ENCODE measurements at regions of chr12 and their contacts with region 1.

Region 1: GRCh38 chr12:50084775-50085614 is at the start of gene SMARCD1:
- DNase-seq: peak; percentile 86
- ATAC-seq: peak; percentile 90
- H3K4me3 Mint-ChIP-seq: peak within 1 kb of the TSS; percentile 90
- H3K27ac Mint-ChIP-seq: peak within 1 kb of the TSS; percentile 94
- H3K4me1 Mint-ChIP-seq: peaks cover 29% of the 10 kb centered on the region
- H3K27me3 Mint-ChIP-seq: no peaks in the 10 kb centered on the region
- total RNA-seq, gene SMARCD1: 72.3 to 78.1 TPM

Region 2: GRCh38 chr12:49903695-49904423 is 181.1 kb before region 1 on chr12 and contains the start of gene FAIM2:
- CTCF ChIA-PET with region 1: no interaction called
- POLR2A ChIA-PET with region 1: no interaction called
- DNase-seq: peak; percentile 67
- ATAC-seq: peak; percentile 85
- H3K4me3 Mint-ChIP-seq: peak within 1 kb of the TSS; percentile 67
- H3K27ac Mint-ChIP-seq: peak within 1 kb of the TSS; percentile 59
- H3K4me1 Mint-ChIP-seq: peaks cover 17% of the 10 kb centered on the region
- H3K27me3 Mint-ChIP-seq: peaks cover 14% of the 10 kb centered on the region
- total RNA-seq, gene FAIM2: 0.23 to 0.55 TPM

Region 3: DNA sequence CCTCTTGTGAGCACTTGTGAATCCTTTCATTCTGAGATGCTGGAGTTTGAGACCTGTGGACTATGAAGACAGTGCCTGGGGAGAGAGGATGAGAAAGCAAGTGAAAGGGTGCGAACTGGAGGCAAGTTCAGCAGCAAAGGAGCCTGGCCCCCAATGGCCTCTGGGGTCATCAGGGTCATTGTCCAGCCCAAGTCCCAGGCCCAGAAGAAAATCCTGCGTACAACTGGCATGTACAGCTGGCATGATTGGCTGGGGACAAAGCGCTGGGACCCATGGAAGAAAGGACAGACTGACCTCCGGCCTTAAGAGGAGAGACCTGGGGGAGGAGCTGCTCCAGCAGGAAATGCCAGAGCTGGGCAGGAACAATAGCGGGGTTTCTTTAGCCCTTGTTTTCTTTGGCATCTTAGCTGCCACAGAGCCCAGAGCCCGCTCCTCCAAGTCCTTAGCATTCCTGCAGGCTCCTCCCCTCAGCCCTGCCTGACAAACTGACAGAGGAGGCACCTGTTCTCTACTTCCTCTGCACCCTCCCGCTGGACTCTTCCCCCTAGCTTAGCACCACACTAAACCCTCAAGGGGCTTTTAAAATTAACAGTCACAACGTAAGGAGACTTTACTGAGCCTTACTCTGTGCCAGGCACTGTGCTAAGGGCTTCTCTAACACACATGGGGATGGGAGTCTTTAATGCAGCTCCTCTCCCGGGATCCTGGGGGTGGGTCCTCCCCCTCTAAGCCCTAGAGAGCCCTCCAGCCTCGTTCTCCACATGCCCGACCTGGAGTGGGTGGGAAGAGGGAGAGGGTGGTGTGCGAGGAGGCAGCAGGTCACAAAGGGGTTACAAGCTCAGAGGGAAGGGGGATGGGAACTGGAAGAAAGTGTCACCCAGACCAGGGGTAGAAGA is 125.2 kb before region 1 on chr12:
- CTCF ChIA-PET with region 1: no interaction called
- POLR2A ChIA-PET with region 1: no interaction called
- DNase-seq: no peak
- ATAC-seq: no peak
- H3K4me3 Mint-ChIP-seq: no peak overlapping the region
- H3K27ac Mint-ChIP-seq: no peak overlapping the region
- H3K4me1 Mint-ChIP-seq: peaks cover 10% of the 10 kb centered on the region
- H3K27me3 Mint-ChIP-seq: peaks cover 79% of the 10 kb centered on the region

Region 4: DNA sequence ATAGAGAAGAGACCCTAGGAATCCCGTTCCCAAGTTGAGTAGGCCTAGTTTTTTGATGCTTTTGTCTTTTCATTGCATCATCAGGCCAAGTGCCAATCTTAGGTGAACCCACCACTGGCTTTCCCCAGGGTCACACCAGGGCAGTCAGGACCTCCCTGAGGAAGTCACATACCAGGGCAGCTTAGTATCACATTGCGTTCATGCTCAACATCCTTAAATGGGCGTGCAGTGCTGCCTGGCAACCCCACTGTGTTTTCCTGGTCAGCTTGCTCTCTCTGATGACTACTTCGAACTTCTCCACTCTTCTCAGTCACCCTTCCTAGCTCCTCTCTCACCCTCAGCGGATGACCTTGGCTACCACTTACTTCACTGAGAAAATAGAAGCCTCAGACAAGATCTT is 18.6 kb before region 1 on chr12:
- CTCF ChIA-PET with region 1: interaction called, 26 read pairs
- POLR2A ChIA-PET with region 1: interaction called, 5 read pairs
- DNase-seq: no peak
- ATAC-seq: no peak
- H3K4me3 Mint-ChIP-seq: no peak overlapping the region
- H3K27ac Mint-ChIP-seq: no peak overlapping the region
- H3K4me1 Mint-ChIP-seq: peaks cover 27% of the 10 kb centered on the region
- H3K27me3 Mint-ChIP-seq: no peaks in the 10 kb centered on the region

Region 5: GRCh38 chr12:50167041-50167828 is 82.2 kb after region 1 on chr12 and contains the start of gene CERS5:
- CTCF ChIA-PET with region 1: interaction called, 7 read pairs
- POLR2A ChIA-PET with region 1: interaction called, 17 read pairs
- DNase-seq: peak; percentile 99
- ATAC-seq: peak; percentile 99
- H3K4me3 Mint-ChIP-seq: peak within 1 kb of the TSS; percentile 87
- H3K27ac Mint-ChIP-seq: peak within 1 kb of the TSS; percentile 98
- H3K4me1 Mint-ChIP-seq: peaks cover 27% of the 10 kb centered on the region
- H3K27me3 Mint-ChIP-seq: no peaks in the 10 kb centered on the region
- total RNA-seq, gene CERS5: 38.7 to 40.6 TPM

Region 6: GRCh38 chr12:50174971-50175715 is 90.1 kb after region 1 on chr12:
- CTCF ChIA-PET with region 1: interaction called, 29 read pairs
- POLR2A ChIA-PET with region 1: interaction called, 5 read pairs
- DNase-seq: peak; percentile 39
- ATAC-seq: no peak
- H3K4me3 Mint-ChIP-seq: no peak overlapping the region
- H3K27ac Mint-ChIP-seq: no peak overlapping the region
- H3K4me1 Mint-ChIP-seq: peaks cover 2% of the 10 kb centered on the region
- H3K27me3 Mint-ChIP-seq: no peaks in the 10 kb centered on the region

Measured in activated CD8-positive, alpha-beta T cell treated with anti-CD3 and anti-CD28 coated beads, Interleukin-2, amount 10 ng/mL, durations not matched to agents 7 days and 5 days (primary cell).